ENCODE measurements at regions of chr10 and their contacts with region 1.

Region 1: DNA sequence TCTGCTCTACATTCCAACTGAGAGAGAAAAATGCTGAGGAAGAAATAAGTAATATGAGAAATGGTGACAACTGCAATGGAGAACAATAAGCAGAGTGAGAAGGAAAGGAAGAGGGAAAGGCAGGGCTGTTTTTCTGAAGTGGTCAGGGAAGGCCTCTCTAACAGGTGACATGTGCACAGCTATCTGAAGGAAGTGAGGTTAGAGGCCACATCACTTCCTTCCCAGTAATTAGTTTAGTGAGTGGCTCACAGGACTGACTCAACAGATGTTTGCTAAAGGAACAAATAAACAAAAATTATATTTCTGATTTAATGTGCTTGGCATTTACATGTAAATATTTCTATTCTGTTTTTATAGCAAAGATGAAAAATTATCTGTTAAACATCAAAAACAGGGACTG is 77.9 kb downstream of the ARHGAP21 start:
- DNase-seq: no peak
- H3K4me3 ChIP-seq: no peak overlapping the region
- CTCF ChIP-seq: no peak

Region 2: GRCh38 chr10:24701447-24701846 is 55.7 kb after region 1 on chr10:
- in situ Hi-C with region 1: loop called (anchors 5 kb)
- DNase-seq: no peak
- H3K4me3 ChIP-seq: no peak overlapping the region
- CTCF ChIP-seq: no peak

Measured in astrocyte of the cerebellum (primary cell).